HAP-1 (cell line): ENCODE measurements at regions of chr1 and their contacts with region 1.

Region 1: GRCh38 chr1:66242646-66243547 is 291.1 kb upstream of the SGIP1 start:
- DNase-seq: peak; percentile 73 to 85
- H3K4me3 ChIP-seq: no peak overlapping the region
- H3K4me1 ChIP-seq: no peaks in the 10 kb centered on the region
- H3K27me3 ChIP-seq: peaks cover 6% of the 10 kb centered on the region

Region 2: GRCh38 chr1:65959896-65960567 is 282.9 kb before region 1 on chr1:
- in situ Hi-C with region 1: loop called (anchors 5 kb)
- DNase-seq: no peak
- H3K4me3 ChIP-seq: no peak overlapping the region
- H3K4me1 ChIP-seq: no peaks in the 10 kb centered on the region
- H3K27me3 ChIP-seq: peaks cover 4% of the 10 kb centered on the region

Region 3: GRCh38 chr1:66207484-66207883 is 35.4 kb before region 1 on chr1:
- in situ Hi-C with region 1: no loop called
- DNase-seq: no peak
- H3K4me3 ChIP-seq: no peak overlapping the region
- H3K4me1 ChIP-seq: no peaks in the 10 kb centered on the region
- H3K27me3 ChIP-seq: no peaks in the 10 kb centered on the region

Region 4: GRCh38 chr1:66300972-66301451 is 58.1 kb after region 1 on chr1:
- in situ Hi-C with region 1: no loop called
- DNase-seq: no peak
- H3K4me3 ChIP-seq: no peak overlapping the region
- H3K4me1 ChIP-seq: no peaks in the 10 kb centered on the region
- H3K27me3 ChIP-seq: no peaks in the 10 kb centered on the region

Region 5: GRCh38 chr1:66460776-66461175 is 217.9 kb after region 1 on chr1:
- in situ Hi-C with region 1: no loop called
- DNase-seq: no peak
- H3K4me3 ChIP-seq: no peak overlapping the region
- H3K4me1 ChIP-seq: no peaks in the 10 kb centered on the region
- H3K27me3 ChIP-seq: no peaks in the 10 kb centered on the region

Region 6: GRCh38 chr1:66642992-66643391 is 400.1 kb after region 1 on chr1:
- in situ Hi-C with region 1: no loop called
- DNase-seq: no peak
- H3K4me3 ChIP-seq: no peak overlapping the region
- H3K4me1 ChIP-seq: no peaks in the 10 kb centered on the region
- H3K27me3 ChIP-seq: no peaks in the 10 kb centered on the region; the same call in 1 of the 2 replicates